Heart left ventricle (tissue), 16 donors: ENCODE measurements at regions of chr6 and their contacts with region 1.

Region 1: GRCh38 chr6:20846602-20847028 is 312.4 kb downstream of the CDKAL1 start:
- DNase-seq: no peak
- ATAC-seq: no peak
- H3K4me3 ChIP-seq: no peak overlapping the region
- H3K27ac ChIP-seq: no peak overlapping the region
- H3K4me1 ChIP-seq: peaks cover 0 to 4% (median 0%) of the 10 kb centered on the region in 12 donors
- H3K27me3 ChIP-seq: no peaks in the 10 kb centered on the region
- CTCF ChIP-seq: no peak
- POLR2A ChIP-seq: no peak

Region 2: DNA sequence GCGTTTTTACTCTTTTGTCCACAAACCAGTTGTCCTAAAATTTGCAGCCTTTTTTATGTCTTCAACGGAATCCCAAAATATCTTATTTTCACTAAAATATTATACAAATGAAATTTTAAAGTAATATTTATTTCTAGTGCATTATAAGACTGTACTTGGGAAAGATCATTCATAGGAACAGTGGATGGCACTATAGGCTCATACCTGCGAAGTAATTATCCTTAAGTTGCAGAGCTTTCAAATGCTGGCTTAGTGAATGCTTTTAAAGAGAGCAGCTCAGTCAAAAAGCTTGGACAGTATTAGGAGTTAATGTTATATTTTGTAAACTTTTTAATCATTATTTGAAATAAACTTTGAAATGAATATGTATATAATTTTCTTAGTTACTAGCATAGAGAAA is 57.5 kb before region 1 on chr6:
- intact Hi-C with region 1: loop called in 1 of 10 experiments (anchors 5 kb)
- DNase-seq: no peak
- ATAC-seq: peak in 1 of 4 donors; percentile 52
- H3K4me3 ChIP-seq: no peak overlapping the region
- H3K27ac ChIP-seq: no peak overlapping the region
- H3K4me1 ChIP-seq: peaks cover 0 to 17% (median 0%) of the 10 kb centered on the region in 12 donors
- H3K27me3 ChIP-seq: no peaks in the 10 kb centered on the region
- CTCF ChIP-seq: peak in 10 of 12 donors; percentile 17 to 50 (median 32)
- POLR2A ChIP-seq: no peak

Region 3: GRCh38 chr6:20946022-20946421 is 99.4 kb after region 1 on chr6:
- intact Hi-C with region 1: no loop called
- DNase-seq: no peak
- ATAC-seq: no peak
- H3K4me3 ChIP-seq: no peak overlapping the region
- H3K27ac ChIP-seq: no peak overlapping the region
- H3K4me1 ChIP-seq: no peaks in the 10 kb centered on the region
- H3K27me3 ChIP-seq: no peaks in the 10 kb centered on the region
- CTCF ChIP-seq: no peak
- POLR2A ChIP-seq: no peak